A549 (cell line): ENCODE measurements at regions of chr2 and their contacts with region 1.

Region 1: DNA sequence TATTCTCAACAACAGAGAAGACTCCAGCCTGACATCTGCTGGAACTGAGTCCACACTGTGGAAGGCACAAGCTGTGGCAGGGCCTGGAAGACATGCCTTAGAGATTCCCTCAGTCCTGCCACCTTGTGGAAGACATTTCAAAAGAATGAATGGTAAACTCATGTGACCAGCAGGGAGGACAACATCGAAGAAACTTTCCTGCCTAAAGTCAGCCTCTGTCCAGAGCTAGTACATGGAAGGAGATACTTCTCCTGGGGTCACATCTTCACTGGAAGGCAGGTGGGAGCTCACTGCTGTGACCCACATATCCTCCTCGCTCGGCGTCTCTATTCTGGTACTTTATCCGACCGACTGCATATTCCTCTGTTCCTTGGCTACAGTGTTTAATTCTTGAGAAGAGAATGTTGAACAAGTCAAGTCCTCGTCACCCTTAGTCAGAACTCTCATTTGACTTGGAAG is 59.5 kb downstream of the PUM2 start:
- DNase-seq: peak; percentile 91 to 93
- ATAC-seq: peak; percentile 100
- H3K4me3 ChIP-seq: no peak overlapping the region
- H3K27ac ChIP-seq: peak overlapping the region in 1 of 2 experiments; percentile 33; a peak in 1 of 6 replicates
- H3K4me1 ChIP-seq: peaks cover 23% of the 10 kb centered on the region
- CTCF ChIP-seq: peak; percentile 94
- EP300 ChIP-seq: no peak
- POLR2A ChIP-seq: no peak
- RAD21 ChIP-seq: peak; percentile 63 to 64

Region 2: GRCh38 chr2:19971691-19972090 is 319.4 kb before region 1 on chr2:
- CTCF ChIA-PET with region 1: no interaction called
- POLR2A ChIA-PET with region 1: no interaction called
- DNase-seq: no peak
- ATAC-seq: no peak
- H3K4me3 ChIP-seq: no peak overlapping the region
- H3K27ac ChIP-seq: no peak overlapping the region
- H3K4me1 ChIP-seq: no peaks in the 10 kb centered on the region
- CTCF ChIP-seq: no peak
- EP300 ChIP-seq: no peak
- POLR2A ChIP-seq: no peak
- RAD21 ChIP-seq: no peak

Region 3: DNA sequence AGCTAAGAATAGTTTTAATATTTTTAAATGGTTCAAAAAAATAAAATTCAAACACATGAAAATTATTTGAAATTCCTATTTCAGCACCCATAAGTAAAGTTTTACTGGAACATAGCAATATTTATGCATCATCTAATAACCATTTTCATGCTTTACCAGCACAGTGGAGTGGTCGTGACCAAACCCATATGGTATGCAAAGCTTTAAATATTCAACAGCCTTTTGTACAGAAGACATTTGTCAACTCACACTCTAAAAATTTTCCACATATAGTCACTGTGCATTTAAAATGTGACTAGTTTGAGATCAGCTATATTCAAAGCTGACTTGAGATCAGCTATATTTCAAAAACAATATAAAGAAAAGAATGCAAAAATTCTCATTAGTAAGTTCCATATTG is 13.3 kb after region 1 on chr2:
- CTCF ChIA-PET with region 1: interaction called, 22 read pairs
- POLR2A ChIA-PET with region 1: interaction called, 4 read pairs
- DNase-seq: no peak
- ATAC-seq: no peak
- H3K4me3 ChIP-seq: no peak overlapping the region
- H3K27ac ChIP-seq: no peak overlapping the region
- H3K4me1 ChIP-seq: no peaks in the 10 kb centered on the region
- CTCF ChIP-seq: no peak
- EP300 ChIP-seq: no peak
- POLR2A ChIP-seq: no peak
- RAD21 ChIP-seq: no peak

Region 4: DNA sequence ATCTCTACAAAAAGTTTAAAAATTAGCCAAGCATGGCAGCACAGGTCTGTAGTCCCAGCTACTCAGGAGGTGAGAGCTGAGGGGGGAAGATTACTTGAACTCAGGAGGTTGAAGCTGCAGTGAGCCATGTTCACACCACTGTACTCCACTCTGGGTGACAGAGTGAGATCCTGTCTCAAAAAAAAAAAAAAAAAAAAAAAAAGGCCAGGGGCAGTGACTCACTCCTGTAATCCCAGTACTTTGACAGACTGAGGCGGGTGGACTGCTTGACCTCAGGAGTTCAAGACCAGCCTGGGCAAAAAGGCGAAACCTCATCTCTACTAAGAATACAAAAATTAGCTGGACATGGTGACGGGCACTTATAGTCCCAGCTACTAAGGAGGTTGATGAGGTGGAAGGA is 22.5 kb after region 1 on chr2:
- CTCF ChIA-PET with region 1: interaction called, 10 read pairs
- POLR2A ChIA-PET with region 1: no interaction called
- DNase-seq: no peak
- ATAC-seq: peak in 1 of 2 experiments; percentile 63; a peak in 3 of 6 replicates
- H3K4me3 ChIP-seq: no peak overlapping the region
- H3K27ac ChIP-seq: no peak overlapping the region
- H3K4me1 ChIP-seq: peaks cover 4% of the 10 kb centered on the region; the same call in 1 of the 3 replicates
- CTCF ChIP-seq: no peak
- EP300 ChIP-seq: no peak
- POLR2A ChIP-seq: no peak
- RAD21 ChIP-seq: no peak